Naive thymus-derived CD4-positive, alpha-beta T cell (primary cell): ENCODE measurements at regions of chr15 and their contacts with region 1.

Region 1: DNA sequence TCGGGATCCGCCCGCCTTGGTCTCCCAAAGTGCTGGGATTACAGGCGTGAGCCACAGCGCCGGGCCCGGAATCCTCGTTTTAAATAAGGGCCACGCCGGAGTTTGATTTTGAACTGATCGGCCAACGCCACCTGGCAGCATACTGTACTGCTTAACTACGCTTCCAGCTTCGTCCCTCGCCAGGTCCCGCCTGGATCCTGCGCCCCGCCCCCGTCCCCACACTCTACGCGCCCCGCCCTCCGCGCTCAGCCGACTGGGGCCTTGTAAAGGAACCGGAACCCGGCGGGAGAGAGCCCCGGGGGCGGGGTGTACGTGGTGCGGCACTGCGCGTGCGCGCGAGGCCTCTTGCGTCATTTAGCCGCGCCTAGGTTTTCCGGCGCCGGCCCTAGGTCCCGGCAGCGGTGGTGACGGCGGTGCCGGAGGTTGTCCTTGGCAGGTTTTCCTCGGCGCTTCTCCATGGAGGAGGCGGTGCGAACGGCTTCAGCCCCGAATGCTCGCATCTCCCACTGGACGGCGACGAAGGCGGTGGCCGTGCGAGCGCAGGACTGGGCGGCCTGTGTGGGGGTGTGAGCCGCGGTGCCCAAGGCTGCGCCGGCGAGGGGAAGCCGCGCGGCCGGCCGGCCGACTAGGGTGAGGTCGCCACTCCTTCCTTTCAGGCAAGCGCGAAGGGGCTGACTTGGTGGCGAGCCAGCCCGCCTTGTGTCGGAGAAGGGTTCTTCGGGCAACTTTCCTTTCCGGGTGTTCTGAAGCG is at the start of gene NIPA2:
- DNase-seq: peak; percentile 97 to 99 (median 98)
- ATAC-seq: peak; percentile 98
- H3K4me3 ChIP-seq: peak within 1 kb of the TSS; percentile 95
- H3K4me3 Mint-ChIP-seq: peak within 1 kb of the TSS; percentile 89 to 99 (median 94)
- H3K27ac ChIP-seq: peak within 1 kb of the TSS; percentile 98
- H3K27ac Mint-ChIP-seq: peak within 1 kb of the TSS; percentile 81 to 99 (median 94)
- H3K4me1 ChIP-seq: peaks cover 15 to 18% of the 10 kb centered on the region in 2 donors
- H3K4me1 Mint-ChIP-seq: peaks cover 18 to 41% (median 29%) of the 10 kb centered on the region in 7 donors
- H3K27me3 ChIP-seq: no peaks in the 10 kb centered on the region
- H3K27me3 Mint-ChIP-seq: peaks cover 0 to 4% (median 0%) of the 10 kb centered on the region in 5 donors
- total RNA-seq, gene NIPA2: 28.7 to 42.0 (median 35.4) TPM

Region 2: GRCh38 chr15:22786868-22787698 is 51.4 kb before region 1 on chr15:
- CTCF ChIA-PET with region 1: no interaction called
- POLR2A ChIA-PET with region 1: interaction called, 7 read pairs
- intact Hi-C with region 1: loop called (anchors 1 kb)
- DNase-seq: peak in 7 of 9 donors; percentile 4 to 51 (median 23)
- ATAC-seq: peak; percentile 20
- H3K4me3 ChIP-seq: peak overlapping the region; percentile 66
- H3K4me3 Mint-ChIP-seq: peak overlapping the region; percentile 81 to 89 (median 85)
- H3K27ac ChIP-seq: peak overlapping the region; percentile 70
- H3K27ac Mint-ChIP-seq: peak overlapping the region; percentile 52 to 87 (median 72)
- H3K4me1 ChIP-seq: peaks cover 0 to 4% of the 10 kb centered on the region in 2 donors
- H3K4me1 Mint-ChIP-seq: peaks cover 10 to 22% (median 15%) of the 10 kb centered on the region in 7 donors
- H3K27me3 ChIP-seq: no peaks in the 10 kb centered on the region
- H3K27me3 Mint-ChIP-seq: peaks cover 0 to 5% (median 0%) of the 10 kb centered on the region in 5 donors

Region 3: DNA sequence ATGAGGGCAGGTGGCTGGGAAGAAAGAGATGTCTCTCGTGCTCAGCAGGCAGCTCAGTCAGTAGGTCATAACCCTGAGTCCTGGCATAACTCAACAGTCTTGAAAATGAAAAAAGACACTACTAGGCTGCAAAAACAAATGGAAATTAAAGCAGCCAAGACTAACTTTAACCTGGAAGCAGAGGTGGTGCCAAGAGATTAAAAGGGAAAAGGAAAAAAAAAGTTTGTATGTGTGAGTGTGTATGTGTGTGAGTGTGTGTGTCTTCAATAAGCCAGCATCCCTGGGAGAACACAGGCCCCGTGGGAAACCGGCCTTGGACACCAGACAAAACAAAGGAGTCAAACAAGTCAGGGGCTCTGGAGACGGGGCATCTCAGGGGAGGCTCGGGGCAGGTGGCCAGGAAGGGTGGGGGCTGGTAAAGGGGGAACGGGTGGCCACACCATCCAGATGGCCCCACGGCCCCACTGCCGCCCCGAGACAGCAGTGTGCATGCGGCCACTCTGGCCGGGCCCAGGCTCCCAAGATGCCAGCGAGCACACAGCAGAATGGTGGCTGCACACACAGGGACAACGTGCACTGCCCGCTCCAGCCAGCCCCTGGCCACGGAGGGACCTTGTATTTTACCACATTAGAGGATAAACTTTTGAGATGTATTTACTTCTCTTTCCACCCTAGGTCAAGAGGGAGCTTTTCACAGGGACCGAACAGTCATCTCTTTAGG is 118.0 kb after region 1 on chr15:
- CTCF ChIA-PET with region 1: no interaction called
- POLR2A ChIA-PET with region 1: no interaction called
- intact Hi-C with region 1: no loop called
- DNase-seq: no peak
- ATAC-seq: no peak
- H3K4me3 ChIP-seq: no peak overlapping the region
- H3K4me3 Mint-ChIP-seq: no peak overlapping the region
- H3K27ac ChIP-seq: no peak overlapping the region
- H3K27ac Mint-ChIP-seq: no peak overlapping the region
- H3K4me1 ChIP-seq: no peaks in the 10 kb centered on the region
- H3K4me1 Mint-ChIP-seq: peaks cover 0 to 3% (median 0%) of the 10 kb centered on the region in 7 donors
- H3K27me3 ChIP-seq: no peaks in the 10 kb centered on the region
- H3K27me3 Mint-ChIP-seq: no peaks in the 10 kb centered on the region

Region 4: DNA sequence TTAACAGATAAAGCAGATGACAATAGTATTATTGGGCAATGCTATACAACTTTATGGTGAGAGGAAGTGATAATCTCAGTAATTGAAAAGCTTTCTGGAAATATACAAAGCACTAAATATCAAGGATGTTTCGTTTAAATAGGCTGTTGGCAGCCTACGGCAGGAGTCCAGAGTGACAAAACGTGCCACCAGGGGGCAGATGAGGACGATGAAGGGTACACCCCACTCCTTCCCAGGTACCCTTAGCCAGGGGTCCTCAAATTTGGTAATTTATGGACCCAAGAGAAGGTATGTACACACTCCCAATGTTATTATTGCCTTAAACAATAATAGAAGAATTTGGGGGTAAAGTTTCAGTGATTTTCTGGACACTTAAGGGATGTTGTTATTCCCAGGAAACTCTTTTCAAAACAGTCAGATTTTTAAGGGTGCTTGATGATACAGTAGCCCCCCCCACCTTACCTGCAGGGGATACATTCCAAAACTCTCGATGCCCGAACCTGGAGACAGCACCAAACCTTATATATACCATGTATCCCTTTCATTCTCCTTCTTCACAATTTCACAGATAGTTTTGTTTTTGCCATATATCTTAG is 810.6 kb after region 1 on chr15:
- CTCF ChIA-PET with region 1: no interaction called
- POLR2A ChIA-PET with region 1: no interaction called
- intact Hi-C with region 1: no loop called
- DNase-seq: peak in 1 of 9 donors; percentile 4
- ATAC-seq: no peak
- H3K4me3 ChIP-seq: no peak overlapping the region
- H3K4me3 Mint-ChIP-seq: no peak overlapping the region
- H3K27ac ChIP-seq: no peak overlapping the region
- H3K27ac Mint-ChIP-seq: no peak overlapping the region
- H3K4me1 ChIP-seq: no peaks in the 10 kb centered on the region
- H3K4me1 Mint-ChIP-seq: no peaks in the 10 kb centered on the region
- H3K27me3 ChIP-seq: no peaks in the 10 kb centered on the region
- H3K27me3 Mint-ChIP-seq: peaks cover 5 to 20% (median 15%) of the 10 kb centered on the region in 5 donors